WTC11 (cell line): ENCODE measurements at regions of chr6 and their contacts with region 1.

Region 1: DNA sequence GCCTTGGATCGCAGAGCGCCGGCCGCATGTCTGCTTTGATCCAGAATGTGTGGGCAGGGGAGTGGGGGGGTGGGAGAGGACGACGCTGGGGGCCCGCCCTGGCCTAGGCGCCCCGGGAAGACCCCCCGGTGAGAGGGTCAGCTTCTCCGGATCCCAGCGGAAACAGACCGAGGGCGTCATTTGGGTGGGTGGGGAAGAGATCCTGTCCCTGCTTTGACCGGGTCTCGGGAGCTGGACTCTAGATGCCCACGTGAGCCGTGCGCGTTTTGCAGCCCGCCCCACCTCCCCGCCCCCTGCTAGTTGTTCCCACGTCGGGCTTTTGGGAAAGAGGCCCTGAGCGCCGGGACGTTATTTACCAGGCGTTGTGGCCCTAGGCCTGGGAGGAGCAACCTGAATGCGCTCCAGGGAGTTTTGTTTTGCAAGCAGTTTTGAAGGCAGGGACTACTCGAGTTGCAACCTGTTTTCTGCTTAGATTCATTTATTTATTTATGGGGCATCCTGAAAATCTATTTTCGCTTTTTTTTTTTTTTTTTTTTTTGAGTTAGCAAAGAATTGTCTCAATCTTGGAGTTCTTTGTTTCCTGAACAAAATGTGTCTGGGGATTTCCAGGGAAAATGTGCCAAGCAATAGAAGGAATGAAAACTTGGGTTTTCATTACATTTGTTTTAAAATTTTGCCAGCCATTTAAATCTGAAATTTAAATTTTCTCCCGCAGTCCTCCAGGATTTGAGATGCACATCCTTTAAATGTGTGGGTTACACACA is 1.6 kb downstream of the DSP start:
- DNase-seq: peak; percentile 68
- ATAC-seq: peak; percentile 18
- H3K4me3 Mint-ChIP-seq: peak overlapping the region; percentile 88
- H3K27ac Mint-ChIP-seq: no peak overlapping the region
- H3K4me1 Mint-ChIP-seq: peaks cover 49% of the 10 kb centered on the region
- H3K27me3 Mint-ChIP-seq: peaks cover 35% of the 10 kb centered on the region
- CTCF ChIP-seq: no peak

Region 2: DNA sequence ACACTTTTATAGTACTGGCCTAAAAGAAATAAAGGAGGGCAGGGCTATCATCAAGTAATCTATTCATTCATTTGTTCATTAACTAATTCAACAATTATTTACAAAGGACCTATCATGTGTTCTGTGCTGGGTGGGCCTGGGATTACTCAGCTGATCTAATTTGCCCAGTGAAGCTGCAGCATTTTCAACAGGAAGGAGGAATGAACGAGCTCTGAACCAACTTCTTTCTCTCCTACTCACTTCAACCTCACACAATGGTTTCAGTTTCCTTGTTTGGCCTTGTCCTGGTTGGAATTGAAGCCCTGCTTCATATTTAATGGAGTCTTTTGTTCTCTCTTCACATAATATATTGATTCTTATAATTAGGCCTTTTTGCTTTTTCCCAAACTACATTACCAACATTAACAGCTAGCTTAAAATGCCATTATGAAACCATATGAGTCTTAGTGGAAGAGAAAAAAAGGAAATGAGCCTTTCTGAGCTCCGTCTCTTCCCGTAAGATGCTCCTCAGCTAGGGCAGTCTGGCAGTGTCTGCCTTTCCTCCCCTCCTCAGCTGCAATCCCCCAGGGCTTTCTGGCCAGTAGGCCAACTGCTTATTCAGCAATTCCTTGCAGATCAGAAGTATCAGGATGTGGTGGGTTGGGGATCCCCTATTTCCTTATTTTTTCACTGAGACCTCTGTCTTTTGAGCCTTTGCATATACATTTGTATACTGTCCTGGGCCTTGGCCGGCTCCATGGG is 1457.0 kb before region 1 on chr6:
- CTCF ChIA-PET with region 1: no interaction called
- POLR2A ChIA-PET with region 1: no interaction called
- DNase-seq: no peak
- ATAC-seq: no peak
- H3K4me3 Mint-ChIP-seq: no peak overlapping the region
- H3K27ac Mint-ChIP-seq: no peak overlapping the region
- H3K4me1 Mint-ChIP-seq: no peaks in the 10 kb centered on the region
- H3K27me3 Mint-ChIP-seq: no peaks in the 10 kb centered on the region; the same call in 1 of the 2 replicates
- CTCF ChIP-seq: no peak

Region 3: GRCh38 chr6:7131390-7131789 is 411.7 kb before region 1 on chr6:
- CTCF ChIA-PET with region 1: no interaction called
- POLR2A ChIA-PET with region 1: interaction called, 10 read pairs
- DNase-seq: no peak
- ATAC-seq: no peak
- H3K4me3 Mint-ChIP-seq: no peak overlapping the region
- H3K27ac Mint-ChIP-seq: no peak overlapping the region
- H3K4me1 Mint-ChIP-seq: peaks cover 55% of the 10 kb centered on the region
- H3K27me3 Mint-ChIP-seq: no peaks in the 10 kb centered on the region
- CTCF ChIP-seq: no peak